ENCODE measurements at regions of chr3 and their contacts with region 1.

Region 1: GRCh38 chr3:108552267-108553159 is 36.7 kb downstream of the CIP2A start:
- DNase-seq: peak; percentile 56
- ATAC-seq: peak; percentile 59; the same call in 1 of the 2 replicates
- H3K4me3 ChIP-seq: no peak overlapping the region
- H3K27ac ChIP-seq: no peak overlapping the region
- H3K4me1 ChIP-seq: peaks cover 4% of the 10 kb centered on the region; the same call in 1 of the 2 replicates
- H3K27me3 ChIP-seq: no peaks in the 10 kb centered on the region
- CTCF ChIP-seq: peak; percentile 60
- POLR2A ChIP-seq: no peak
- RAD21 ChIP-seq: peak; percentile 53

Region 2: GRCh38 chr3:107753480-107753879 is 799.0 kb before region 1 on chr3:
- CTCF ChIA-PET with region 1: no interaction called
- POLR2A ChIA-PET with region 1: no interaction called
- dilution Hi-C with region 1: no loop called
- in situ Hi-C with region 1: no loop called
- intact Hi-C with region 1: loop called (anchors 5 kb)
- DNase-seq: peak; percentile 30
- ATAC-seq: peak; percentile 61; the same call in 1 of the 2 replicates
- H3K4me3 ChIP-seq: no peak overlapping the region
- H3K27ac ChIP-seq: no peak overlapping the region
- H3K4me1 ChIP-seq: no peaks in the 10 kb centered on the region; the same call in 1 of the 2 replicates
- H3K27me3 ChIP-seq: no peaks in the 10 kb centered on the region
- CTCF ChIP-seq: peak; percentile 44
- POLR2A ChIP-seq: no peak
- RAD21 ChIP-seq: peak; percentile 35; the same call in 1 of the 2 replicates

Region 3: GRCh38 chr3:107938143-107938542 is 614.4 kb before region 1 on chr3:
- CTCF ChIA-PET with region 1: no interaction called
- POLR2A ChIA-PET with region 1: no interaction called
- dilution Hi-C with region 1: no loop called
- in situ Hi-C with region 1: no loop called
- intact Hi-C with region 1: loop called (anchors 2 kb)
- DNase-seq: peak; percentile 42
- ATAC-seq: peak; percentile 62
- H3K4me3 ChIP-seq: no peak overlapping the region
- H3K27ac ChIP-seq: no peak overlapping the region
- H3K4me1 ChIP-seq: no peaks in the 10 kb centered on the region
- H3K27me3 ChIP-seq: peaks cover 2% of the 10 kb centered on the region
- CTCF ChIP-seq: peak; percentile 57
- POLR2A ChIP-seq: no peak
- RAD21 ChIP-seq: peak; percentile 64

Region 4: DNA sequence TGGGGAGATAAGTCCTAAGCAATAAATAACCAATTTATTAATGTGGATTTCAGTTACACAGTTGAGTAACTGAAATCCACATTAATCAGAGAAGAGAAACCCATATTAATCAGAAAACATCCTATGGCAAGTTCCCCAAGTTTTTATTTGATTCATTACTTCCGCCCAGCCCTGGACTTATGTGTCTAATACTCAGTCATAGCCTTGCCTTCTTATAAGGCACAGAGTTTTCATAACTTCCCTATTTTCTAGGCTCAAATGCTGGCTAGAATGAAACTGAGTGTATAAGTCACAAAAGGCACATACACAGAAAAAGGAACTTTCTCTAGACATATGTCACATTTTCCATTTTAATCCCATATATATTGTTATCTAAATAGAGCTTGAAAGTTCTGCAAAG is 490.5 kb before region 1 on chr3:
- CTCF ChIA-PET with region 1: interaction called, 3 read pairs
- POLR2A ChIA-PET with region 1: no interaction called
- dilution Hi-C with region 1: no loop called
- in situ Hi-C with region 1: no loop called
- intact Hi-C with region 1: loop called (anchors 10 kb)
- DNase-seq: no peak
- ATAC-seq: no peak
- H3K4me3 ChIP-seq: no peak overlapping the region
- H3K27ac ChIP-seq: no peak overlapping the region
- H3K4me1 ChIP-seq: peaks cover 6% of the 10 kb centered on the region
- H3K27me3 ChIP-seq: no peaks in the 10 kb centered on the region
- CTCF ChIP-seq: no peak
- POLR2A ChIP-seq: no peak
- RAD21 ChIP-seq: no peak

Region 5: GRCh38 chr3:108159865-108160264 is 392.6 kb before region 1 on chr3:
- CTCF ChIA-PET with region 1: no interaction called
- POLR2A ChIA-PET with region 1: no interaction called
- dilution Hi-C with region 1: no loop called
- in situ Hi-C with region 1: no loop called
- intact Hi-C with region 1: loop called (anchors 10 kb)
- DNase-seq: peak; percentile 66
- ATAC-seq: peak; percentile 64
- H3K4me3 ChIP-seq: no peak overlapping the region
- H3K27ac ChIP-seq: no peak overlapping the region
- H3K4me1 ChIP-seq: peaks cover 3% of the 10 kb centered on the region
- H3K27me3 ChIP-seq: no peaks in the 10 kb centered on the region
- CTCF ChIP-seq: no peak
- POLR2A ChIP-seq: no peak
- RAD21 ChIP-seq: no peak

Region 6: GRCh38 chr3:109257269-109257668 is 704.8 kb after region 1 on chr3:
- CTCF ChIA-PET with region 1: no interaction called
- POLR2A ChIA-PET with region 1: no interaction called
- dilution Hi-C with region 1: no loop called
- in situ Hi-C with region 1: no loop called
- intact Hi-C with region 1: no loop called
- DNase-seq: peak; percentile 43
- ATAC-seq: no peak
- H3K4me3 ChIP-seq: no peak overlapping the region
- H3K27ac ChIP-seq: no peak overlapping the region
- H3K4me1 ChIP-seq: no peaks in the 10 kb centered on the region
- H3K27me3 ChIP-seq: no peaks in the 10 kb centered on the region
- CTCF ChIP-seq: no peak
- POLR2A ChIP-seq: no peak
- RAD21 ChIP-seq: no peak